IMR-90 (cell line): ENCODE measurements at regions of chr1 and their contacts with region 1.

Region 1: DNA sequence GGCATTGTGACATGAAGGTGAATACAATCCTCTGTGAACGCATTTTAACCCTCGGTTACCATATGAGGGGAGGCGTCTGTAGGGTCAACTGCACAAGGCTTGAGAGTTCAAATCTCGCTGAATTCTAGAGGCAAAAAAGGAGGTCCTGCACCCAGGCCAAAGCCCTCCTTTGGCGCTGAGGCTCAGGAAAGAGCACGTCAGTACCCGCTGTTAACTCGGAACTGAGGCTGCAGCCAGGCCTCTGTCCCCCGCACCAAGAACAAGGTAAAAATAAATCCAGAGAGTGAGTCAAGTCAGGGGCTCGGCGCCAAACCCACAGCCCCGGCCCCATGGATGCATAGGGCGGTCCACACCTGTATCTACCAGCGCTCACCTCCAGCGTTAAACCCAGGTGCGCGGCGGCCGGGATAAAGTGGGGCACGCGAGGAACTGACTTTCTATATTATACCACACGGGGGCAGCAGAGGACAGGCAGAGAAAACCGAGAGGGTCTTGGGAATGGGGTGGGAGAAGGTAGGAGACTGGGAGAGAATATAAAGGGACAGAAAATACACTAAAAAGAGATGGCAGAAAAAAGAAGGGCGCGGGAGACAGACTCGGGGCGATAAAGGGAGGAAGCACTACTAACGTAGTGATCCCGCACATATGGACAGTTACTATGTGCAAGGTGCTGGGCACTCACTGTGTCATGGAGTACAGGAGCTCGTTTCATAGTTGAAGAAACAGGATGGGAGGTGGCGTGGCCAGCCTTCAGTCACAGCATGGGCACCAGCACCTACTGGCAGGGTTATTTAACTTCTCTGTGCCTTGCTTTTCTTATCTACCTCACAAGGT is 54.8 kb downstream of the DMRTA2 start:
- DNase-seq: peak; percentile 6
- ATAC-seq: peak; percentile 88
- H3K4me3 ChIP-seq: no peak overlapping the region
- H3K27ac ChIP-seq: no peak overlapping the region
- H3K4me1 ChIP-seq: no peaks in the 10 kb centered on the region
- H3K27me3 ChIP-seq: peaks cover 7% of the 10 kb centered on the region
- CTCF ChIP-seq: peak; percentile 78
- POLR2A ChIP-seq: 0 out of 2 replicates have a peak, but pooled peaks have one; percentile 45
- RAD21 ChIP-seq: peak; percentile 88

Region 2: DNA sequence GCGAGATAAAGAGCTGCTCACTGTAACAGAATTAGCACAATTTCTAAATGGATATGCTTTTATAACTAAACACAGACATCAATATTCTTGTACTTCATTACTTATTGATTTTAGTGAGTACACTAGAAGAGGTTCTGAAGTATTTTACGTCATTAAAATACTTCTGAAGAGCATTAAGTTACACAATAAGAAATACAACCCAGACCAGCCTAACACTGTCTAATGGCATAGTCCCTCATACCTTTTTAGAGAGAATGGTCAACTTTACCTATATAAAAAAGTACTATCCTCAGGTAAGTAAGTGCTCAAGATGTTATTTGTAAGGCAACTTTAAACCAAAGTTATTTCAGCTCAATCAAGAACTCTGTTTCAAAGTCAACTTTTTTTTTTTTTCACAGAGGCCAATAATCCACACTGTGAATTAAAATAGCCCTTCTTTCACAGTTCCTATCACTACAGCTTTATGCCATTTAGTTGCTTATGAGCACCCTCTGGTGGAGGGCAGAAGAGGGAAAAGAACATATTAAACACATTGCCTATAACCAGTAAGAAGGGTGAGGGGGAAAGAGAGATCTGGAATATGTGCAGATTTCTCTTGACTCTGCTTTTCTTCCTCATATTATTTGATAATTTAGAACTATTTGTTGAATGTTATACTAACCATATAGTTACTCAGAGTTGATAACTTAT is 236.9 kb after region 1 on chr1:
- CTCF ChIA-PET with region 1: interaction called, 4 read pairs
- POLR2A ChIA-PET with region 1: no interaction called
- dilution Hi-C with region 1: no loop called
- in situ Hi-C with region 1: loop called (anchors 5 kb)
- intact Hi-C with region 1: loop called (anchors 1 kb)
- DNase-seq: peak; percentile 57
- ATAC-seq: peak; percentile 73
- H3K4me3 ChIP-seq: no peak overlapping the region
- H3K27ac ChIP-seq: no peak overlapping the region
- H3K4me1 ChIP-seq: peaks cover 4% of the 10 kb centered on the region; the same call in 1 of the 2 replicates
- H3K27me3 ChIP-seq: no peaks in the 10 kb centered on the region
- CTCF ChIP-seq: peak; percentile 69
- POLR2A ChIP-seq: no peak
- RAD21 ChIP-seq: peak; percentile 73

Region 3: DNA sequence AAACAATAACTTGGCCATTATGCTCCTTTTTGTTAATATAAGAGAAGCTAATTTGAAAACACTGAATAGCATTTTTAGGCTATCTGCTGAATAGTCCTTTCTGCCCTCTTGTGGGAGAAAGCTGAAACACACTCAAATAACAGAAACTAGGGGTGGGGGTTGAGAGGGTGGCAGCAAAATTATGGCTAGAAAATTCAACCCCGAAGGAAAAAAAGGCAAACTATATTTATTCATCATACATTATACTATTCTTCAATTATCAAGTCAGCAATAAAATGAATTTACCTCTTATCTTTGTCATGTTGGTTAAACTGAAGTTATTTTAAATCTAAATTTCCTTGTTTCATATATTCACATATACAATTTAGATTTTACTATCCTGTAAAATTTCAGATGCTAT is 335.7 kb after region 1 on chr1:
- CTCF ChIA-PET with region 1: interaction called, 3 read pairs
- POLR2A ChIA-PET with region 1: no interaction called
- dilution Hi-C with region 1: no loop called
- in situ Hi-C with region 1: no loop called
- intact Hi-C with region 1: loop called (anchors 1 kb)
- DNase-seq: peak; percentile 41
- ATAC-seq: peak; percentile 64; the same call in 1 of the 2 replicates
- H3K4me3 ChIP-seq: no peak overlapping the region
- H3K27ac ChIP-seq: no peak overlapping the region
- H3K4me1 ChIP-seq: no peaks in the 10 kb centered on the region
- H3K27me3 ChIP-seq: no peaks in the 10 kb centered on the region
- CTCF ChIP-seq: peak; percentile 74
- POLR2A ChIP-seq: no peak
- RAD21 ChIP-seq: peak; percentile 69

Region 4: DNA sequence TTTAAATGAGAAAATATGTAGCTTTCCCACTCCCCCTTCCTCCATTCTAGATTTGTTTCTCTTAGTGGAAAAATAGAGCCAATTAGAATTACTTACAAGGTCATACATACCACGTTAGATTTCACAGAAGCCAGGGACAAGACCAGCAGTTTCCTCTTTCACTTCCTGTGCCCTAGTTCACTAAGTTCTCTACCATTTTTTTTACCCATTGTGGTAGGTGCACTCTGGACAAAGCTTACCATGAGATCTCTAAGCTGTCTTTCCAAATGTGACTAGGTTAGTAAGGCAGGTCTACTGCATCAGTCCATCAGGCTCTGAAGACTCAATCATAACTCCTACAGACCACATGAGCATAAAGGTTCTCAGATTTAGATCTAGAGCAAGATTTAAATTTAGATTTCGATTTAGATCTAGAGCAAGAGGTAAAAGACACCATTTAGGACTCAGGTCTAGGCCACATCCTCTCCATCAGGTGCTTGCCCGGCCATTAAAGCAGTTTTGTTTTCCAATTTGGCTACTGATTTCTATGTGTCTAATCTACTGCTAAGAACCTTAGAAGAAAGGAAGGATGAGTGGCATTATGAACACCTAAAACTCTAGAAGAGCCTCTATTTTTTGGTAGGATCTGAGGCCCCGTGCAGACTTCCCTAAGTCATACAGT is 356.4 kb after region 1 on chr1:
- CTCF ChIA-PET with region 1: no interaction called
- POLR2A ChIA-PET with region 1: no interaction called
- dilution Hi-C with region 1: no loop called
- in situ Hi-C with region 1: loop called (anchors 10 kb)
- intact Hi-C with region 1: no loop called
- DNase-seq: no peak
- ATAC-seq: no peak
- H3K4me3 ChIP-seq: no peak overlapping the region
- H3K27ac ChIP-seq: no peak overlapping the region
- H3K4me1 ChIP-seq: no peaks in the 10 kb centered on the region
- H3K27me3 ChIP-seq: no peaks in the 10 kb centered on the region
- CTCF ChIP-seq: no peak
- POLR2A ChIP-seq: no peak
- RAD21 ChIP-seq: no peak

Region 5: DNA sequence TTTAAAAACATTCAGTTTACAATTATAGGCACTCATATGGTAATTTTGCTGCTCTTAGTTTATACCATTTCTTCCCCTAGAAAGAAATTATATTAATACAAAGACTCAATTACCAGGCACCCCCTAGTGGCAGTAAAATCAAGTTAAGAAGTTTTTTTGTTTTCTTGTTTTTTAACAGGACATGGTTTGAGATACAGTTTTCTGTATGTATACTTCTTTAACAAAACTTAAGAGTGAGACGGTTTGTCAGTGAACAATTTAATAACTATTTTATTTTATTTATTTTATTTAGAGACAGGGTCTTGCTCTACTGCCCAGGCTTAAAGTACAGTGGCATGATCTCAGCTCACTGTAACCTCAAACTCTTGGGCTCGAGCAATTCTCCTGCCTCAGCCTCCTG is 367.0 kb after region 1 on chr1:
- CTCF ChIA-PET with region 1: no interaction called
- POLR2A ChIA-PET with region 1: no interaction called
- dilution Hi-C with region 1: no loop called
- in situ Hi-C with region 1: no loop called
- intact Hi-C with region 1: loop called (anchors 1 kb)
- DNase-seq: peak; percentile 33
- ATAC-seq: peak; percentile 65
- H3K4me3 ChIP-seq: no peak overlapping the region
- H3K27ac ChIP-seq: no peak overlapping the region
- H3K4me1 ChIP-seq: no peaks in the 10 kb centered on the region
- H3K27me3 ChIP-seq: no peaks in the 10 kb centered on the region
- CTCF ChIP-seq: peak; percentile 60
- POLR2A ChIP-seq: no peak
- RAD21 ChIP-seq: peak; percentile 41

Region 6: GRCh38 chr1:51058858-51059257 is 690.5 kb after region 1 on chr1:
- CTCF ChIA-PET with region 1: no interaction called
- POLR2A ChIA-PET with region 1: no interaction called
- dilution Hi-C with region 1: no loop called
- in situ Hi-C with region 1: no loop called
- intact Hi-C with region 1: loop called (anchors 1 kb)
- DNase-seq: peak; percentile 37
- ATAC-seq: peak; percentile 75
- H3K4me3 ChIP-seq: no peak overlapping the region
- H3K27ac ChIP-seq: no peak overlapping the region
- H3K4me1 ChIP-seq: peaks cover 4% of the 10 kb centered on the region; the same call in 1 of the 2 replicates
- H3K27me3 ChIP-seq: peaks cover 2% of the 10 kb centered on the region
- CTCF ChIP-seq: peak; percentile 60
- POLR2A ChIP-seq: no peak
- RAD21 ChIP-seq: peak; percentile 75